A549 (cell line): ENCODE measurements at regions of chr20 and their contacts with region 1.

Region 1: GRCh38 chr20:22691369-22692118 is 107.2 kb upstream of the FOXA2 start:
- DNase-seq: peak; percentile 85 to 89
- ATAC-seq: peak; percentile 93 to 97
- H3K4me3 ChIP-seq: no peak overlapping the region; the same call in 2 of the 3 replicates
- H3K27ac ChIP-seq: peak overlapping the region; percentile 83 to 90
- H3K4me1 ChIP-seq: peaks cover 23% of the 10 kb centered on the region
- CTCF ChIP-seq: peak; percentile 97
- EP300 ChIP-seq: no peak
- POLR2A ChIP-seq: no peak
- RAD21 ChIP-seq: peak; percentile 99 to 100

Region 2: GRCh38 chr20:22333885-22334545 is 357.5 kb before region 1 on chr20:
- CTCF ChIA-PET with region 1: interaction called, 311 read pairs
- POLR2A ChIA-PET with region 1: no interaction called
- DNase-seq: peak; percentile 81 to 96
- ATAC-seq: peak; percentile 83 to 93
- H3K4me3 ChIP-seq: no peak overlapping the region
- H3K27ac ChIP-seq: no peak overlapping the region
- H3K4me1 ChIP-seq: no peaks in the 10 kb centered on the region
- CTCF ChIP-seq: peak; percentile 94
- EP300 ChIP-seq: no peak
- POLR2A ChIP-seq: no peak
- RAD21 ChIP-seq: peak; percentile 95 to 96

Region 3: GRCh38 chr20:22744341-22745193 is 53.0 kb after region 1 on chr20:
- CTCF ChIA-PET with region 1: interaction called, 14 read pairs
- POLR2A ChIA-PET with region 1: no interaction called
- DNase-seq: no peak
- ATAC-seq: no peak
- H3K4me3 ChIP-seq: no peak overlapping the region
- H3K27ac ChIP-seq: peak overlapping the region in 1 of 2 experiments; percentile 4; a peak in 1 of 6 replicates
- H3K4me1 ChIP-seq: no peaks in the 10 kb centered on the region
- CTCF ChIP-seq: no peak
- EP300 ChIP-seq: no peak
- POLR2A ChIP-seq: no peak
- RAD21 ChIP-seq: no peak

Region 4: DNA sequence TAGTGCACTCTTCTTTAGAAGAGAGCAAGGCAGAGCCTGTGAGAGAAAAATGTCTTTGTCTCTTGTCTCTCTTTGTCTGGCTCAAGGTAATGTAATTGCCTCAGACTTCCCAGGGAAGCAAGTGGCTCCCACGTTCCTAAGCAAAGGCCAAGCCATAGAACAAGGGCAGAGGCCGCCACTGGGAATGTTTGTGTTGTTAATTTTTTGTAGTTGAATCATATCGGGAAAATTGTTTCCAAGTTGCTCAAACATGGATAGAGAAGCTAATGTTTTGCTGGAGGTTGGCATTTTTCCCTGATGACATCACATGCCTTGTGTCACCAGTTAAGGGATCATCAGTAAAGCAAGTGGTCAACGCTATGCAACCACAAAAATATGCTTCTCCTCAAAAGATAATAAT is 104.3 kb after region 1 on chr20:
- CTCF ChIA-PET with region 1: interaction called, 70 read pairs
- POLR2A ChIA-PET with region 1: interaction called, 3 read pairs
- DNase-seq: peak; percentile 79 to 97
- ATAC-seq: peak; percentile 92
- H3K4me3 ChIP-seq: no peak overlapping the region
- H3K27ac ChIP-seq: peak overlapping the region; percentile 92 to 97
- H3K4me1 ChIP-seq: peaks cover 66% of the 10 kb centered on the region
- CTCF ChIP-seq: no peak
- EP300 ChIP-seq: peak; percentile 96 to 97; a peak in 4 of 5 replicates
- POLR2A ChIP-seq: no peak
- RAD21 ChIP-seq: peak; percentile 38 to 78

Region 5: DNA sequence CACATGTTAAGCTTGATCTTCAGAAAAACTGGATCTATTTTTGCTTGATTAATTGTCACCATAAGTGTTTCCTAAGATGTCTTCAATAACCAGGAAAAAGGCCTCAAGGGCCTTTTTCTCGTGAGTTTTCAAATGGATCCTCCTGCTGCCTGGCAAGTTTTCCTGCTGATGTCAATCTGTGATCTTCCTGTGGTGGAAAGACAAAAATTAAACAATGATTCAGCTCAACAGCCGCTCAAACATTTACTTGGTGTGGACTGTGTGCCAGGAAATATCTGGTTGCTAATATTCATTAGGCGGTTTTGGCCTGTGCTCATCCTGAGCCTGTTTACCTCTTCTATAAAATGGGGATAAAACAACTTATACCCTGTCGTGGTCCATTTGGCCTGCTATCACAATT is 308.2 kb after region 1 on chr20:
- CTCF ChIA-PET with region 1: interaction called, 16 read pairs
- POLR2A ChIA-PET with region 1: no interaction called
- DNase-seq: peak; percentile 47 to 84
- ATAC-seq: peak; percentile 57 to 87; a peak in 4 of 6 replicates
- H3K4me3 ChIP-seq: no peak overlapping the region
- H3K27ac ChIP-seq: peak overlapping the region; percentile 89
- H3K4me1 ChIP-seq: peaks cover 22% of the 10 kb centered on the region
- CTCF ChIP-seq: no peak
- EP300 ChIP-seq: peak; percentile 63 to 65; a peak in 2 of 5 replicates
- POLR2A ChIP-seq: no peak
- RAD21 ChIP-seq: no peak; a peak in 2 of 5 replicates

Region 6: GRCh38 chr20:23050847-23051631 is 359.5 kb after region 1 on chr20:
- CTCF ChIA-PET with region 1: interaction called, 190 read pairs
- POLR2A ChIA-PET with region 1: interaction called, 31 read pairs
- DNase-seq: peak in 1 of 2 experiments; percentile 77
- ATAC-seq: peak; percentile 3 to 34
- H3K4me3 ChIP-seq: peak overlapping the region; percentile 72
- H3K27ac ChIP-seq: peak overlapping the region; percentile 93 to 95
- H3K4me1 ChIP-seq: peaks cover 29% of the 10 kb centered on the region
- CTCF ChIP-seq: peak; percentile 76
- EP300 ChIP-seq: no peak
- POLR2A ChIP-seq: no peak
- RAD21 ChIP-seq: peak; percentile 73 to 74

Region 7: GRCh38 chr20:23320317-23320716 is 628.8 kb after region 1 on chr20:
- CTCF ChIA-PET with region 1: interaction called, 11 read pairs
- POLR2A ChIA-PET with region 1: no interaction called
- DNase-seq: peak; percentile 55 to 64
- ATAC-seq: peak; percentile 81 to 93; a peak in 5 of 6 replicates
- H3K4me3 ChIP-seq: no peak overlapping the region
- H3K27ac ChIP-seq: no peak overlapping the region
- H3K4me1 ChIP-seq: no peaks in the 10 kb centered on the region; the same call in 2 of the 3 replicates
- CTCF ChIP-seq: peak; percentile 28; the same call in 2 of the 3 replicates
- EP300 ChIP-seq: no peak
- POLR2A ChIP-seq: no peak
- RAD21 ChIP-seq: peak; percentile 30 to 41; a peak in 3 of 5 replicates